ENCODE measurements at regions of chr7 and their contacts with region 1.

Region 1: DNA sequence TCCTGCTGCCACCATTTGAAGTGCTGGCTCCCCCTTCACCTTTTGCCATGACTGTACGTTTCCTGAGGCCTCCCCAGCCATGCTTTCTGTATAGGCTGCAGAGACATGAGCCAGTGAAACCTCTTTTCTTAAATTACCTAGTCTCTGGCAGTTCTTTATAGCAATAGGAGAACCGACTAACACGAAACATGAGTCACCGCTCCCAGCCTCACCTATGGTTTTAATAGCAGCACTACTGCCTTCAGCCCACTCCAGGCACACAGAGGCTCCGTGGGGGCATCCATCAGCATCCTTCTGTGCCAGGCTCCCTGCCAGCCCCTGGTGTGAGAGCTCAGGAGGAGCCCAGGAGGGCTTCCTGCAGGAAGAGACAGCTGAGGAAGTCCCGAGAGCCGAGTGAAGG is 5.5 kb upstream of the ZNF316 start:
- DNase-seq: no peak
- ATAC-seq: 0 out of 2 replicates have a peak, but pooled peaks have one; percentile 4
- H3K4me3 ChIP-seq: no peak overlapping the region
- H3K27ac ChIP-seq: no peak overlapping the region
- H3K4me1 ChIP-seq: peaks cover 9% of the 10 kb centered on the region; the same call in 1 of the 2 replicates
- H3K27me3 ChIP-seq: no peaks in the 10 kb centered on the region
- CTCF ChIP-seq: no peak

Region 2: DNA sequence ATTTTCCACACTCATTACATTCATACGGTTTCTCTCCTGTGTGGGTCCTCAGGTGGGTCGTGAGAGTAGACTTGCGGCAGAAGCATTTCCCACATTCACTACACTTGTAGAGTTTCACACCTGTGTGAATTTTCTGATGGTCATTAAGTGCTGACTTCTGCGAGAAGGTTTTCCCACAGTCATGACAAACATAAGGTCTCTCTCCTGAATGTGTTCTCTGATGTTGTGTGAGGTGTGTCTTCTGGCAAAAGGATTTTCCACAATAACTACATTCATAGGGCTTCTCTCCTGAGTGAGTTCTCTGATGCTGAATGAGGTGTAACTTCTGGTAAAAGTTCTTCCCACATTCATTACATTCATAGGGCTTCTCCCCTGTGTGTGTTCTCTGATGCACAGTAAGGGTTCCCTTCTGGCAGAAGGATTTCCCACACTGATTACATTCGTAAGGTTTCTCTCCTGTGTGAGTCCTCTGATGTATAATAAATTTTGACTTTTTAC is 60.1 kb after region 1 on chr7:
- CTCF ChIA-PET with region 1: no interaction called
- POLR2A ChIA-PET with region 1: no interaction called
- in situ Hi-C with region 1: loop called (anchors 5 kb)
- intact Hi-C with region 1: no loop called
- DNase-seq: no peak
- ATAC-seq: no peak
- H3K4me3 ChIP-seq: no peak overlapping the region
- H3K27ac ChIP-seq: no peak overlapping the region
- H3K4me1 ChIP-seq: no peaks in the 10 kb centered on the region
- H3K27me3 ChIP-seq: no peaks in the 10 kb centered on the region
- CTCF ChIP-seq: no peak